MCF 10A (cell line): ENCODE measurements at regions of chr10 and their contacts with region 1.

Region 1: DNA sequence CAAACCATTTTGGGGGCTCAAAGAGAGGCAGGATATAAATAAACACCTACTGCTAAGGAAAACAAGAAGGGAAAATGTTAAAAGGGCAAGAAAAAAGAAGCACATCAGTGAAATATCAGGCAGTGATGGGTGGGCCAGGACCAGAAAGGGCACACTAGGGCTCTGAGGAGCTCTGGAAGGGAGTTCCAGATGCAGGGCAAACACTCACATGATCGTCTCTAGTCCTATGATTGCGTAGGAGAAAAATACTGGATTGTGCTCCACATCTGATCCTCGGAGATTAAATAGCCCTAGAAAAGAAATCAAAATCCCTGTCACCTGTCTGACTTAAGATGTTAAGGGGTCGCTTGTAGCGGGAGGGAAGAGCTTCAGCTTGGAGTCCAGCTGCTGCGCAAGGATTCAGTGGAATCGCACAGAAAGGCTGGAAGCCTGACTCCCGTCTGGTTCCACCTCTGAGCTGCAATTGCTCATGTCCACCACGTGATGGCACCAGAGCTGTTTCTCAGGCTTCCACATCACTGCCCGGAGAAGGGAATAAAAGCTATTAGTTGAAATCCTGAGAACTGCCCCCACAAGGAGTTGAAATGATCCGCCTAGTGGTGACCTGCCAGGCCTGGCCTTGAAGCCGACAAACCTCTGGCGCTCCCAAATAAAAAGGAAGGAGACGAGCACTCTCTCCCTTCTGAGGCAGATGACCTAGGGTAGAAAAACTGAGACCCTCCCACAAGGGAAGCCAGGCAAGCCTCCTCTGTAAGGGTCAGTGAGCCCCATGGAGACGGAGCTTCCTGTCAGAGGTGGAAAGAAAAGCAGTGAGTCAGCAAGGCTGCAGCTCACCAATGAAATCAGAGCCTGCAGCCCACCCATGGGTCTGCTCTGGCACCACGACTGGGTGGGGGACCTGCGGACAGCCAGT is 39.2 kb downstream of the XPNPEP1 start:
- DNase-seq: peak; percentile 90
- H3K4me3 Mint-ChIP-seq: no peak overlapping the region
- H3K27ac Mint-ChIP-seq: no peak overlapping the region
- H3K4me1 Mint-ChIP-seq: no peaks in the 10 kb centered on the region
- H3K27me3 Mint-ChIP-seq: no peaks in the 10 kb centered on the region
- CTCF ChIP-seq: peak; percentile 92

Region 2: GRCh38 chr10:109902934-109903589 is 18.9 kb after region 1 on chr10:
- CTCF ChIA-PET with region 1: interaction called, 44 read pairs
- POLR2A ChIA-PET with region 1: interaction called, 122 read pairs
- intact Hi-C with region 1: no loop called
- DNase-seq: no peak
- H3K4me3 Mint-ChIP-seq: peak overlapping the region; percentile 59
- H3K27ac Mint-ChIP-seq: peak overlapping the region; percentile 96
- H3K4me1 Mint-ChIP-seq: peaks cover 64% of the 10 kb centered on the region
- H3K27me3 Mint-ChIP-seq: no peaks in the 10 kb centered on the region
- CTCF ChIP-seq: no peak

Region 3: DNA sequence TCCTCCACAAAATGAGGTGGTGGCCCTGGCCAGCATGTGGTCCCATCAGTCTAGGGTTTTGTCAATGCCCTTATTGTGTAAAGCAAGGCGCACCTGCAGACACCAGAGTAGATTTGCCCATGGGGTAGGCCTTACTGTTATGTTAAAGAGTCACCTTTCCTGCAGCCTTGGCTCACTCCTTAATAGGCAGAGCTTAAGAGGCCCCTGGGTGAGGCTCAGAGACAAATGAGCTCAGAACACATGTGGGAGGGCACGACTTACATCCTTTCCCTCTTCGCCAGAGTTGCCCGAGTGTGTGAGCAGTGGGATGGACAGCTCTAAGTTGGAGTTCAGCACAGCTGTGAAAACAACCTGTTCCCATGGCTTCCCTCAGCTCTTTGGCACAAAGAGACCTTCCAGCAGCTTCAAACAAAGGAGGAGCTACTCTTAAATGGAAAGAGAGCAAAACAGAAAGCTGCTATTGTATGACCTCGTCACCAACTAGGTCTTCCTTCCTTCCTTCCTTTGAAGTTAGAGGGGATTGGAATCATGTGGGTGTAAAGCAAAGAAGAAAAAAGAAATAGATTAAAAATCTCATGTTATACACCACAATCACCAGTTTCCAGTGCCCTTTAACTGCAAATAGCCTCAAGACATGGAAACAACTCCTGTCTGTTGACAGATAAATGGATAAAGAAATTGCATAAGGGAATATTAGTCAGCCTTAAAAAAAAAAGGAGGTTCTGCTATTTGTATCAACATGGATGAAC is 51.0 kb after region 1 on chr10:
- CTCF ChIA-PET with region 1: interaction called, 11 read pairs
- POLR2A ChIA-PET with region 1: no interaction called
- intact Hi-C with region 1: no loop called
- DNase-seq: peak; percentile 68
- H3K4me3 Mint-ChIP-seq: peak overlapping the region; percentile 35
- H3K27ac Mint-ChIP-seq: peak overlapping the region; percentile 79
- H3K4me1 Mint-ChIP-seq: peaks cover 38% of the 10 kb centered on the region
- H3K27me3 Mint-ChIP-seq: no peaks in the 10 kb centered on the region
- CTCF ChIP-seq: no peak

Region 4: DNA sequence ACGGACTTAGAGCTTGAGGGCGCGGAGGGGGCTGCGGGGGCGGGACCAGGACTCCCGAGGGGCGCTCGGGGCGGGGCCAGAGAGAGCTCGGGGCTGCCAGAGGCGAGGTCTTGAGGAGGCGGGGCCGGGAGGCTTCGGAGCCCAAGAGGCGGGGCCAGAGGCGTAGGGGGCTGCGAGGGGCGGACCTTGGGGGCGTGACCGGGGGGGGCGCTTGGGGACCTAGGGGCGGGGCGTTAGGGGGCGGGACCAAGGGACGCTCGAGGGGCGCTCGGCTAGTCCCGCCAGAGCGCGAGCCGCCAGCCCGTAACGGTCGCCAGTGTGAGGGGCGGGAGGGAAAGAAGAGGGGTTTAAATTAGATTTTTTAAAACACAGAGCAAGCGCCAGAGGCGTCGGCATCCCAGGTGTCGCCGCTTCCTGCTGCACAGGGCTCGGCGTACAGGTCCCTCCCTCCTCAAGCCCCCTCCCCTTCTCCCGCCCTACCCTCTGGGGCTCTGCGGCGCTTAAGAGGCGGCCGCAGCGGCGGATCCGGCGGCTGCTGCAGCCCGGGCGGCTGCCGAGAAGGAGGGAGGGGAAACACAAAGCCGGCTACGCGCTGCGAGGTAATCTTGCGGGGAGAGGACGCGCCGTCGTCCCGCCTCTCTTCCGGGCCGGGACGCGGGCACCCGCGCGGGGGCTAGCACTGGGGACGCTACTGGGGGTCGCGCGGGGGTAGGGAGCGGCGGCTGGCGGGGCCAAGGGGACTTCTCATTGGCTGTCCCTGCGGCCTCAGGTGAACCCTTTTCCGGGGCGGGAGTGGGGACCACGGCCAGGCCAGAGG is 123.8 kb after region 1 on chr10 and contains the start of gene ADD3:
- CTCF ChIA-PET with region 1: interaction called, 118 read pairs
- POLR2A ChIA-PET with region 1: interaction called, 13 read pairs
- intact Hi-C with region 1: loop called (anchors 2 kb)
- DNase-seq: peak; percentile 84
- H3K4me3 Mint-ChIP-seq: no peak within 1 kb of the TSS
- H3K27ac Mint-ChIP-seq: peak within 1 kb of the TSS; percentile 19
- H3K4me1 Mint-ChIP-seq: peaks cover 17% of the 10 kb centered on the region
- H3K27me3 Mint-ChIP-seq: no peaks in the 10 kb centered on the region
- CTCF ChIP-seq: no peak
- total RNA-seq, gene ADD3: 11.2 and 14.5 TPM in 2 replicates

Region 5: DNA sequence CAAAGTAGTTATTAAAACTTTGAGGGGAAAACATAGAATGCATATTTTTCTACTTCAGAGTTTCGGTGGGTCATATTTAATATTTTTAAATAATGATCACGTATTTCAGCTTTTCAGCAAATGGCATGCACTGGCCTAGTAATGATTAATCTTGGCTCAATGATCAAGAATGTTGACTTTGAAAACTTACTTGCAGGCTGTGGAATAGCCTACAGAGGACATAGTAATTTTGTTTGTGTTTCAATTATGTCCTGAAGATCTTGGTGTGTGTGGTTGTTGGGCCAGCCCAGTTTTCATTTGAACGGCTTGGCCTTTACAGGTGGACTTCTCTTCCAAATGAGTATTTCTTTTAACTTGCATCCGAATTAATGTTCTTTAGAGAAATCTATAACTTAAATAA is 158.8 kb after region 1 on chr10:
- CTCF ChIA-PET with region 1: interaction called, 10 read pairs
- POLR2A ChIA-PET with region 1: no interaction called
- intact Hi-C with region 1: no loop called
- DNase-seq: no peak
- H3K4me3 Mint-ChIP-seq: no peak overlapping the region
- H3K27ac Mint-ChIP-seq: no peak overlapping the region
- H3K4me1 Mint-ChIP-seq: peaks cover 5% of the 10 kb centered on the region
- H3K27me3 Mint-ChIP-seq: no peaks in the 10 kb centered on the region
- CTCF ChIP-seq: no peak

Region 6: GRCh38 chr10:110225756-110226542 is 341.8 kb after region 1 on chr10:
- CTCF ChIA-PET with region 1: no interaction called
- POLR2A ChIA-PET with region 1: no interaction called
- intact Hi-C with region 1: loop called (anchors 10 kb)
- DNase-seq: peak; percentile 92
- H3K4me3 Mint-ChIP-seq: peak overlapping the region; percentile 81
- H3K27ac Mint-ChIP-seq: peak overlapping the region; percentile 67
- H3K4me1 Mint-ChIP-seq: peaks cover 33% of the 10 kb centered on the region
- H3K27me3 Mint-ChIP-seq: no peaks in the 10 kb centered on the region
- CTCF ChIP-seq: peak; percentile 63